GM12878 (cell line): ENCODE measurements at regions of chr3 and their contacts with region 1.

Region 1: DNA sequence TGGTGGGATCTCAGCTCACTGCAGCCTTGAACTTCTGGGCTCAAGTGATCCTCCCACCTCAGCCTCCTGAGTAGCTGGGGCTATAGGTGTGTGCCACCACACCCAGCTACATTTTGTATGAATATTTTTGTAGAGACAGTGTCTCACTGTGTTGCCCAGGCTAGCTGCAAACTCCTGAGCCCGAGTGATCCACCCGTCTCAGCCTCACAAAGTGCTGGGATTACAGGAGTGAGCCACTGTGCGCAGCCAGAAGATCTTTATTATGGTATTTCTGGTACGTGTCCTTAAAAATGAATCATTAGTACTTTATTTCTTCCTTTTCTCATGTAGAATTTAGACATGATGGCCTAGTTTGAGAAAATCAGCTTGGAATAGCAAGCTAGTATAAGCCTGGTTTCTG is 153.3 kb downstream of the BCHE start:
- DNase-seq: no peak
- ATAC-seq: peak; percentile 45
- H3K4me3 ChIP-seq: no peak overlapping the region
- H3K27ac ChIP-seq: no peak overlapping the region
- H3K4me1 ChIP-seq: no peaks in the 10 kb centered on the region
- H3K27me3 ChIP-seq: no peaks in the 10 kb centered on the region
- CTCF ChIP-seq: no peak
- EP300 ChIP-seq: no peak
- POLR2A ChIP-seq: no peak
- RAD21 ChIP-seq: no peak

Region 2: GRCh38 chr3:165669504-165669903 is 14.4 kb before region 1 on chr3:
- CTCF ChIA-PET with region 1: interaction called, 17 read pairs
- POLR2A ChIA-PET with region 1: interaction called, 3 read pairs
- RAD21 ChIA-PET with region 1: interaction called, 18 read pairs
- SMC1A ChIA-PET with region 1: interaction called, 30 read pairs
- in situ Hi-C with region 1: no loop called
- intact Hi-C with region 1: no loop called
- DNase-seq: no peak
- ATAC-seq: peak; percentile 78
- H3K4me3 ChIP-seq: no peak overlapping the region
- H3K27ac ChIP-seq: no peak overlapping the region
- H3K4me1 ChIP-seq: no peaks in the 10 kb centered on the region; the same call in 1 of the 2 replicates
- H3K27me3 ChIP-seq: no peaks in the 10 kb centered on the region
- CTCF ChIP-seq: no peak
- EP300 ChIP-seq: no peak
- POLR2A ChIP-seq: no peak
- RAD21 ChIP-seq: no peak

Region 3: DNA sequence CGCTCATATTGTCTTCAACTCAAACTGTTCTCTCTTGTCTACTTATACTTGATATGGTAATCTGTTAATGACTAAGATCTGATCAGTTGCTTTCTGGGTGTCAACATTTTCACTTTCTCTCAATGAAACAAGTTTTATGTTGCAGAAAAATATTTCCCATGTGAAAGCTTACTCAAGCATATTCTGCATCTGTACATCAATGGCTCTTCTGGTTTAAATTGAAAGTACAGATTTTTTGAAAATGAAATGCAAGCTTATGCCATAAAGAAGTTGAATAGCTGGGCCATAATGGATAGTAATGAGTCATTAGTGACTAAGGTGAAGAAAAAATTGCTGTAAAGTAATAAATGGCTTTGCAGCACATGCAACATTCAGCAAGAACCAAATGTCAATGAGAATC is 12.5 kb after region 1 on chr3:
- CTCF ChIA-PET with region 1: interaction called, 3 read pairs
- POLR2A ChIA-PET with region 1: interaction called, 6 read pairs
- RAD21 ChIA-PET with region 1: interaction called, 12 read pairs
- SMC1A ChIA-PET with region 1: interaction called, 5 read pairs
- in situ Hi-C with region 1: no loop called
- intact Hi-C with region 1: no loop called
- DNase-seq: no peak
- ATAC-seq: peak; percentile 86
- H3K4me3 ChIP-seq: no peak overlapping the region
- H3K27ac ChIP-seq: no peak overlapping the region
- H3K4me1 ChIP-seq: no peaks in the 10 kb centered on the region
- H3K27me3 ChIP-seq: no peaks in the 10 kb centered on the region
- CTCF ChIP-seq: no peak
- EP300 ChIP-seq: no peak
- POLR2A ChIP-seq: no peak
- RAD21 ChIP-seq: no peak